B cell (primary cell): ENCODE measurements at regions of chr19 and their contacts with region 1.

Region 1: GRCh38 chr19:1905071-1905862 is at the starts of genes ADAT3 and SCAMP4:
- DNase-seq: peak; percentile 98
- ATAC-seq: peak; percentile 92
- H3K4me3 ChIP-seq: peak within 1 kb of the TSS; percentile 8 to 75 (median 66)
- H3K4me3 Mint-ChIP-seq: peak within 1 kb of the TSS; percentile 90
- H3K27ac ChIP-seq: peak within 1 kb of the TSS; percentile 78 to 90
- H3K27ac Mint-ChIP-seq: peak within 1 kb of the TSS; percentile 96
- H3K4me1 ChIP-seq: peaks cover 48 to 70% of the 10 kb centered on the region in 2 donors
- H3K4me1 Mint-ChIP-seq: peaks cover 49% of the 10 kb centered on the region
- H3K27me3 ChIP-seq: no peaks in the 10 kb centered on the region
- H3K27me3 Mint-ChIP-seq: no peaks in the 10 kb centered on the region
- CTCF ChIP-seq: no peak
- total RNA-seq, gene ADAT3: 13.4 and 13.9 TPM in 2 replicates
- total RNA-seq, gene SCAMP4: 60.0 and 62.9 TPM in 2 replicates

Region 2: GRCh38 chr19:1780272-1780958 is 124.9 kb before region 1 on chr19:
- CTCF ChIA-PET with region 1: no interaction called
- POLR2A ChIA-PET with region 1: no interaction called
- intact Hi-C with region 1: no loop called
- DNase-seq: no peak
- ATAC-seq: no peak
- H3K4me3 ChIP-seq: no peak overlapping the region
- H3K4me3 Mint-ChIP-seq: no peak overlapping the region
- H3K27ac ChIP-seq: no peak overlapping the region
- H3K27ac Mint-ChIP-seq: no peak overlapping the region
- H3K4me1 ChIP-seq: peaks cover 7 to 14% of the 10 kb centered on the region in 2 donors
- H3K4me1 Mint-ChIP-seq: peaks cover 10% of the 10 kb centered on the region
- H3K27me3 ChIP-seq: peaks cover 0 to 74% (median 34%) of the 10 kb centered on the region in 4 experiments
- H3K27me3 Mint-ChIP-seq: peaks cover 52% of the 10 kb centered on the region
- CTCF ChIP-seq: no peak

Region 3: GRCh38 chr19:1848399-1849131 is 56.7 kb before region 1 on chr19 and contains the start of gene REXO1:
- CTCF ChIA-PET with region 1: no interaction called
- POLR2A ChIA-PET with region 1: no interaction called
- intact Hi-C with region 1: loop called (anchors 1 kb)
- DNase-seq: peak; percentile 100
- ATAC-seq: peak; percentile 73
- H3K4me3 ChIP-seq: peak within 1 kb of the TSS; percentile 47 to 95 (median 83)
- H3K4me3 Mint-ChIP-seq: peak within 1 kb of the TSS; percentile 90
- H3K27ac ChIP-seq: peak within 1 kb of the TSS; percentile 95 to 97
- H3K27ac Mint-ChIP-seq: peak within 1 kb of the TSS; percentile 93
- H3K4me1 ChIP-seq: peaks cover 59 to 80% of the 10 kb centered on the region in 2 donors
- H3K4me1 Mint-ChIP-seq: peaks cover 63% of the 10 kb centered on the region
- H3K27me3 ChIP-seq: no peaks in the 10 kb centered on the region
- H3K27me3 Mint-ChIP-seq: no peaks in the 10 kb centered on the region
- CTCF ChIP-seq: peak; percentile 87
- total RNA-seq, gene REXO1: 72.4 and 72.6 TPM in 2 replicates

Region 4: DNA sequence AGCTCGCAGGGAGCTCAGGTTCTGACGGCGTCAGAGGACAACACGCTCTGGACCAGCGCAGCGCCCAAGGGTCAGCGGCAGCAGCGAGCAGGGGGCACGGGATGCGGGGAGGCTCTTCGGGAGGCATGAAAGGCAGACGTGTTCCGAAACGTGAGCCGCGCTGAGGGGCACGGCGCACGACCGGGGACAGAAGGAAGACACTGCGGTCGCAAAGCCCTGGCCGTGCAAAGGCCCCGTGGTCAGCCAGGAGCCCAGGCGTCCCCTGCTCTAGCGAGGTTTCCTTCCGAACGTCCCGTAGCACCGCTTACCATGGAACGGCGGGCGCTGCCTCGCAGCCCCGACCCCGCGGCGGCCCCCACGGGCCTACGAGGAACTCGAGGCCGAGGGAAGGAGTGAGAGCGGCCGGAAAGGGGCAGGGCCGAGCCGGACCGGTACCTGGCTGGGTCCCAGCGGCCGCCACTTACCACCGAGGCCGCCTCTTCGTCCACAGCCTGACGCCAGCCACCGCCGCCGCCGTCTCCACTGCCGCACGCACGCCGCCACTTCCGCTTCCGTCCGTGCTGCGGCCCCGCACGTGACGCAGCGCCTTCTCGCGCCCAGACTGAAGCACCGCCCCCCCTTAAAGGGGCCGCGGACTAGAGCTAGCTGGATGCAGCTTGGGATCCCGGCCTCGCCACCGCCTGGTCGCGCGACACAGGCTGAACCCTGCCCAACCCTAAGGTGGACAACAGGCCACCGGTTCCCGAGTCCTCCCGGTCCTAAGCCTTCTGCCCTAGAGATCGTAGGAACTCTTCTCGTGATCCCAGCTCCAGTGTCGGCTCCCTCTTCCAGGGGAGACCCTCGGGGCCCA is 29.4 kb before region 1 on chr19:
- CTCF ChIA-PET with region 1: interaction called, 3 read pairs
- POLR2A ChIA-PET with region 1: interaction called, 12 read pairs
- intact Hi-C with region 1: loop called (anchors 1 kb)
- DNase-seq: peak; percentile 93
- ATAC-seq: peak; percentile 94
- H3K4me3 ChIP-seq: peak overlapping the region; percentile 81 to 97 (median 92)
- H3K4me3 Mint-ChIP-seq: peak overlapping the region; percentile 99
- H3K27ac ChIP-seq: peak overlapping the region; percentile 66 to 96
- H3K27ac Mint-ChIP-seq: peak overlapping the region; percentile 94
- H3K4me1 ChIP-seq: peaks cover 20 to 36% of the 10 kb centered on the region in 2 donors
- H3K4me1 Mint-ChIP-seq: peaks cover 28% of the 10 kb centered on the region
- H3K27me3 ChIP-seq: no peaks in the 10 kb centered on the region
- H3K27me3 Mint-ChIP-seq: no peaks in the 10 kb centered on the region
- CTCF ChIP-seq: no peak

Region 5: DNA sequence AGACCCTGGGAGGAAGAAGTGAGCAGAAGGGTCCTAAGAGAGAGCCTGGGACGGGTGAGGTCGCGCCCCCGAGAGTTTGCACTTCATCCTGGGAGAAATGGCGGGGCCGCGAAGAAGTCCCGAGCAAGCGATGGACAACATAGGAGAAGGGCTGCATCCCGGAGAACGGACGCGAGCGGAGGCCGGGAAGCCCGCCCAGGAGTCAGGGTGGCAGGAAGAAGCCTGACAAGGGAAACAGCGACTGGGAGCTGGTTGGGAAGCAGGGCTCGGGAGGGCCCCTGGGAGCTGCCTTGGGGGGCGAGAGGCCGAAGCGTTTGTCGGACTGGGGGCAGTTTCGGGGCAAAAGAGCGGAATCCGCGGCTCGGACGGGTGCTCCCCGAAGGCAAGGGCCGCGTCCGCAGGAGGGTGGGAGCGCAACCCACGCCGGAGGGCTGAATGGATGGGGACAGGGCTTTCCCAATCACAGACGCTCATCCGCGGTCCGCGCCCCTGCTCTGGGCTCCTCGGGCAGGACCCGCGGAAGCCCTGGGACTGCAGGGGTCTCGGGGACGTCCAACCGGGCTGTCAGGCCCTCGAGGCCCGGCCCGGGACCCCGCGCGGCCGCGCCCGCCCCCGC is 20.4 kb before region 1 on chr19:
- CTCF ChIA-PET with region 1: interaction called, 3 read pairs
- POLR2A ChIA-PET with region 1: interaction called, 12 read pairs
- intact Hi-C with region 1: loop called (anchors 1 kb)
- DNase-seq: no peak
- ATAC-seq: no peak
- H3K4me3 ChIP-seq: peak overlapping the region; percentile 63 to 92 (median 86)
- H3K4me3 Mint-ChIP-seq: peak overlapping the region; percentile 99
- H3K27ac ChIP-seq: peak overlapping the region; percentile 59 to 62
- H3K27ac Mint-ChIP-seq: peak overlapping the region; percentile 96
- H3K4me1 ChIP-seq: peaks cover 32 to 51% of the 10 kb centered on the region in 2 donors
- H3K4me1 Mint-ChIP-seq: peaks cover 36% of the 10 kb centered on the region
- H3K27me3 ChIP-seq: no peaks in the 10 kb centered on the region
- H3K27me3 Mint-ChIP-seq: no peaks in the 10 kb centered on the region
- CTCF ChIP-seq: no peak

Region 6: GRCh38 chr19:1923319-1923718 is 18.1 kb after region 1 on chr19:
- CTCF ChIA-PET with region 1: interaction called, 7 read pairs
- POLR2A ChIA-PET with region 1: interaction called, 5 read pairs
- intact Hi-C with region 1: loop called (anchors 1 kb)
- DNase-seq: peak; percentile 66
- ATAC-seq: peak; percentile 85
- H3K4me3 ChIP-seq: no peak overlapping the region
- H3K4me3 Mint-ChIP-seq: no peak overlapping the region
- H3K27ac ChIP-seq: peak overlapping the region in 1 of 2 donors; percentile 46
- H3K27ac Mint-ChIP-seq: peak overlapping the region; percentile 76
- H3K4me1 ChIP-seq: peaks cover 0 to 22% of the 10 kb centered on the region in 2 donors
- H3K4me1 Mint-ChIP-seq: peaks cover 4% of the 10 kb centered on the region
- H3K27me3 ChIP-seq: no peaks in the 10 kb centered on the region
- H3K27me3 Mint-ChIP-seq: no peaks in the 10 kb centered on the region
- CTCF ChIP-seq: no peak